ENCODE measurements at regions of chr9 and their contacts with region 1.

Region 1: GRCh38 chr9:121322037-121322775 is 47.8 kb downstream of the STOM start:
- DNase-seq: peak; percentile 97
- H3K4me3 Mint-ChIP-seq: peak overlapping the region; percentile 7
- H3K27ac Mint-ChIP-seq: peak overlapping the region; percentile 100
- H3K4me1 Mint-ChIP-seq: peaks cover 43% of the 10 kb centered on the region
- H3K27me3 Mint-ChIP-seq: no peaks in the 10 kb centered on the region
- CTCF ChIP-seq: no peak

Region 2: DNA sequence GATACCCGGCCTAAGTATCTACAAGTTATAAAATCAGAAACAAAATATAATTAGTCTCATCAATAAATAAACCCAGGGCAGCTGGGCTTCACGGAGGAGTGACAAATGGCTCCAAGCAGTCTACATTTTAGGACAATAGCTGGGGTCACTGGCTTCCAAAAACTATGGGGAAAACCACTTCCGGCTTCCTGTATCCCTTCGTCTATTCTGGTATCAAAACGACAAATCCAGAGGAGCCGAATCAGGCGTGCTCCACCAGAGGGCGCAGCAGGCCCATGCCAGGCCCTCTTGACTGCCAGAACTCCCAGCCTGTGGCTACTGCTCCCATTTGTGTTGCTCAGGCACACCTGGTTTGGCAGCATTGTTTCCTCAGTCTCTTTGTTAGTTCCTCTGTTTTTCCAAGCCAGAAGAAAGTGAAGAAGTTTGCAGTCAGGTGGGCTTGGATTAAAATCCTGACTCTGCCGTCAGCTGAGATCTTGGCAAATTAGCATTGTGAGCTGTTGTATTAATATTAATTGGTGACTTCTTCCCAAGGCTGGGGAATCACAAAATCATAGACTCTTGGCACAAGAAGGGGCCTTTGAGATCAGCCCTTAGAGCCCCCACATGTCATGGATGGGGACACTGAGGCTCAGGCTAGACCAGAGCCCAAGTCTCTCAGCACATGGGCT is 108.9 kb before region 1 on chr9:
- CTCF ChIA-PET with region 1: interaction called, 95 read pairs
- POLR2A ChIA-PET with region 1: no interaction called
- intact Hi-C with region 1: loop called (anchors 1 kb)
- DNase-seq: peak; percentile 90
- H3K4me3 Mint-ChIP-seq: no peak overlapping the region
- H3K27ac Mint-ChIP-seq: peak overlapping the region; percentile 54
- H3K4me1 Mint-ChIP-seq: peaks cover 8% of the 10 kb centered on the region
- H3K27me3 Mint-ChIP-seq: no peaks in the 10 kb centered on the region
- CTCF ChIP-seq: peak; percentile 97

Region 3: GRCh38 chr9:121278535-121279261 is 43.5 kb before region 1 on chr9:
- CTCF ChIA-PET with region 1: interaction called, 67 read pairs
- POLR2A ChIA-PET with region 1: interaction called, 14 read pairs
- intact Hi-C with region 1: loop called (anchors 1 kb)
- DNase-seq: peak; percentile 94
- H3K4me3 Mint-ChIP-seq: peak overlapping the region; percentile 65
- H3K27ac Mint-ChIP-seq: peak overlapping the region; percentile 96
- H3K4me1 Mint-ChIP-seq: peaks cover 62% of the 10 kb centered on the region
- H3K27me3 Mint-ChIP-seq: no peaks in the 10 kb centered on the region
- CTCF ChIP-seq: peak; percentile 83

Region 4: GRCh38 chr9:121308765-121309164 is 13.4 kb before region 1 on chr9:
- CTCF ChIA-PET with region 1: interaction called, 20 read pairs
- POLR2A ChIA-PET with region 1: no interaction called
- intact Hi-C with region 1: no loop called
- DNase-seq: no peak
- H3K4me3 Mint-ChIP-seq: no peak overlapping the region
- H3K27ac Mint-ChIP-seq: no peak overlapping the region
- H3K4me1 Mint-ChIP-seq: peaks cover 7% of the 10 kb centered on the region
- H3K27me3 Mint-ChIP-seq: no peaks in the 10 kb centered on the region
- CTCF ChIP-seq: no peak

Region 5: DNA sequence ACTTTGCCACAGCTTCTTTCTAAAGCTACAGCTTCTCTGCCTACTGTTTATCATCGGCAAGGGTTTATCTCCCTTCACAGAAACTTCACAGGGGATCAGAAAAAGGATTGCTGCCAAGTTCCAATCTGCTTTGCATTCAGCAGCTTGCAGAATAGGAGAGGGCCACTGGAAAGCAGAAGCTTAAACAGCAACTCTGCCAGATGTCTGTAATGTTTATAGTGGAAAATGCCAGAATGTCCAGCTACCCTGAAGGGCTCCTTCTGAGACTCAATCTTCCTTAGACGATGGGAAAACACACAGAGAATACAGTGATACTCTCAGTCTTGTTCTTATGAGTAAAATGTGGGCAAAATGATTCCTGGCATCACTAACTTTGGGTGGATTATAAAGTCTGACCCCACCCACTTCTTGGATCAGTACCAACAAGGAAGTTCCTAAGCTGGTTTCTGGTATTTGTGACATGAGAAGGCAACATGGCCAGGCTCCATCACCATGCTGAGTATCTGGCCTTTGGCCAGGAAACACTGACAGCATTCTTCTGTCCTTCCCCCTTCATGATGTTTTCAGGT is 28.9 kb after region 1 on chr9:
- CTCF ChIA-PET with region 1: interaction called, 34 read pairs
- POLR2A ChIA-PET with region 1: interaction called, 4 read pairs
- intact Hi-C with region 1: no loop called
- DNase-seq: peak; percentile 90
- H3K4me3 Mint-ChIP-seq: no peak overlapping the region
- H3K27ac Mint-ChIP-seq: no peak overlapping the region
- H3K4me1 Mint-ChIP-seq: peaks cover 52% of the 10 kb centered on the region
- H3K27me3 Mint-ChIP-seq: no peaks in the 10 kb centered on the region
- CTCF ChIP-seq: no peak

Region 6: DNA sequence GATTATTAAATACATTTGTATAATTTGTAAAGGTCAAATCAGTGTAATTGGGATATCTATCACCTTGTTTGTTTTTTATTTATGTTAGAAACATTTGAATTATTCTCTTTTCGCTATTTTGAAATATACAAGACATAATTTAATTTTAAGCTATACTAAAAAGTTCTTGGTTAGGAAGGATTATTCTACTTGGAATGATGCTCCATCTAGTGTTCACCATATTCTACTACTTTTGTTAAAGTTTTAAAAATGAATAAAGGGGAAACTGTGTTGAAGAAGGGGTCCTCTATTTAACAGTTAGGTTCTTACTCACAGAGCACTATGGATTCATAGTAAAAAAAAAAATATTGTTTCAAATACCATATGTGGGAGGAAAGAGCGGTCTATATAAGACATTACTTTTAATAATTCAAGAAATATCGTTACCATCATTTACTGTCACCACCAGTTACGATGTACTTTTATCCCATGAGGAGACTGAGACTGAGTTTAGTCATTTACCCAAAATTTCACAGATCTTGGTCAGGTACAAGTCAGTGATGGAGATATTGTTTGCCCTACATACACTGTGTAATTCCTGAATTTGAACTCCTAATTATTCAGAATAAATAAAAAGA is 54.1 kb after region 1 on chr9:
- CTCF ChIA-PET with region 1: interaction called, 133 read pairs
- POLR2A ChIA-PET with region 1: interaction called, 96 read pairs
- intact Hi-C with region 1: loop called (anchors 1 kb)
- DNase-seq: no peak
- H3K4me3 Mint-ChIP-seq: no peak overlapping the region
- H3K27ac Mint-ChIP-seq: no peak overlapping the region
- H3K4me1 Mint-ChIP-seq: peaks cover 28% of the 10 kb centered on the region
- H3K27me3 Mint-ChIP-seq: no peaks in the 10 kb centered on the region
- CTCF ChIP-seq: peak; percentile 45

Region 7: DNA sequence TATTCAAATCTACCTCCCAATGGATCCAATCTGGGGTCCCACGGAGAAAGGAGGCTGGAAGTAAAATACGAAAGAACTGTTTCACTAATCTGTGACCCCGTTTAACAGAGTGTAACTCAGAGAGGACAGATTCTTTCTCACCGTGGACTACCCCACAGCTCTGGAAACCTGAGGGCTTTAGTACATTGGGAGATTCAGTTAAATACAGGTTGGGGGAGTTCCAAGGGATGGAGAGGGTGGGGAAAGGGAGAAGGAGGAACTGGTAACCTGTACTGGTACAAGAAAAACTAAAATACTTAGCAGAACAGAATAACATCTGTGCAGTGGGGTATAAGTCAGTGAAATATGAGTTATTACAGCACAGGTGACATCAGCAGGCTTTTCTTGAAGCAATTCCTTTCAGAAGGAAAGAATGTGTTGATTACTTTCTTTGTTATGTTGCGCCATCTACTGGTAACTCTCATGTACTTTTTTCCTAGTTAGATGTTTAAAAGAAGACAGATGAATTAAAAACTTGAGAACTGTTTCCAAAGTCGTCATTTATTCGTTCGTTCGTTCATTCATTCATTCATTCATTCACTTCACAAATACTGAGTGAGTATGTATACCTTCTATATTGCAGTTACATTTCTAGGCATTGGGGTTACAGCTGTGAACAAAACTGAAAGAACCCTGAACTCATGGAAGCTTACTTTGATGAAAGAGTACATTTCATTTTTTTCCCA is 77.8 kb after region 1 on chr9:
- CTCF ChIA-PET with region 1: interaction called, 152 read pairs
- POLR2A ChIA-PET with region 1: interaction called, 37 read pairs
- intact Hi-C with region 1: loop called (anchors 1 kb)
- DNase-seq: peak; percentile 80
- H3K4me3 Mint-ChIP-seq: no peak overlapping the region
- H3K27ac Mint-ChIP-seq: no peak overlapping the region
- H3K4me1 Mint-ChIP-seq: peaks cover 20% of the 10 kb centered on the region
- H3K27me3 Mint-ChIP-seq: no peaks in the 10 kb centered on the region
- CTCF ChIP-seq: peak; percentile 63